ENCODE measurements at regions of chr17 and their contacts with region 1.

Region 1: GRCh38 chr17:51461578-51462004 is 201.2 kb downstream of the UTP18 start:
- DNase-seq: peak; percentile 37
- H3K4me3 ChIP-seq: no peak overlapping the region
- H3K27ac ChIP-seq: no peak overlapping the region
- H3K4me1 ChIP-seq: no peaks in the 10 kb centered on the region
- H3K27me3 ChIP-seq: no peaks in the 10 kb centered on the region
- CTCF ChIP-seq: peak; percentile 83 to 88
- POLR2A ChIP-seq: no peak

Region 2: DNA sequence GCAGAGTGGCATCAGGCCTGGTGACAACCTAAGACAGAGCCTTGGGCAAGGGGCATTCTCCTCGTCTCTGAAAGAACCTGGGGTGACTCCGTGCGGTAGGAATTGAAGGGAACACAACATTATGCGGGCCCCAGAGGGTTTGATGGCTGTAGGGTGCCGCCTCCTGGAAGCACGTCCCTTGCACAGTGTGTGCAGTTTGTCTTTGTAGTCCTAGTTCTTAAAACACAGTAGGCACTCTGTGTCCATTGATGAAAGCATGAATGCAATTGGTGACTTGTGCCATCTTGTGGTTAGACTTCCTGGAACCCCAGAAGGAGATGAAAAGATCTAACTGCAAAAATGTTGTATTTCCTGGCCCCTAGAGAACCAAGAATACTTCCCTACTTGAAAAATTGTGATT is 78.6 kb after region 1 on chr17:
- CTCF ChIA-PET with region 1: interaction called, 5 read pairs
- POLR2A ChIA-PET with region 1: no interaction called
- dilution Hi-C with region 1: no loop called
- intact Hi-C with region 1: loop called (anchors 1 kb)
- DNase-seq: no peak
- H3K4me3 ChIP-seq: no peak overlapping the region
- H3K27ac ChIP-seq: no peak overlapping the region
- H3K4me1 ChIP-seq: no peaks in the 10 kb centered on the region
- H3K27me3 ChIP-seq: no peaks in the 10 kb centered on the region
- CTCF ChIP-seq: no peak
- POLR2A ChIP-seq: no peak

Measured in endothelial cell of umbilical vein (primary cell).